HEK293 (cell line): ENCODE measurements at regions of chr12 and their contacts with region 1.

Region 1: GRCh38 chr12:31406345-31406744 is 80.4 kb upstream of the SINHCAF start:
- H3K4me3 ChIP-seq: no peak overlapping the region
- H3K27ac ChIP-seq: no peak overlapping the region
- H3K4me1 ChIP-seq: no peaks in the 10 kb centered on the region
- CTCF ChIP-seq: no peak

Region 2: GRCh38 chr12:31423405-31423804 is 17.1 kb after region 1 on chr12:
- CTCF ChIA-PET with region 1: interaction called, 12 read pairs
- POLR2A ChIA-PET with region 1: no interaction called
- H3K4me3 ChIP-seq: no peak overlapping the region
- H3K27ac ChIP-seq: no peak overlapping the region
- H3K4me1 ChIP-seq: no peaks in the 10 kb centered on the region
- CTCF ChIP-seq: no peak

Region 3: DNA sequence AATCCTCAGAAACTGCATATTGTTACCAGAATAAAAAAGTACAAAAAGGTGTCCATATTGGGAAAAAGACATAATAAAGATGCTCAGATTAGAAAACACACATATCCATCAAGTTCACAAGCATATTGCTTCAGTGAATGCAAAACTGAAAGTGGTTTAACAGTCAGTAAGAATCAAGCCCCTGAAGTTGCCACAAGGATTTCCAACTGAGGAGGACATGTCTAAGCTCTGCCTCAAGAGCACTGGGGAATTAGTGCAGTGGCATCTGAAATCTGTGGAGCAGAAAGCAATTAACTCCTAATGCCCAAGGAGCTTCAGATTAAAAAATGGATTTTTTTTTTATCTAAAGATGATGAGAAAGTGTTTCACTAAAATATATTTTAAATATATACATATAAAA is 71.3 kb after region 1 on chr12:
- CTCF ChIA-PET with region 1: no interaction called
- POLR2A ChIA-PET with region 1: no interaction called
- H3K4me3 ChIP-seq: no peak overlapping the region
- H3K27ac ChIP-seq: no peak overlapping the region
- H3K4me1 ChIP-seq: no peaks in the 10 kb centered on the region; the same call in 1 of the 2 replicates
- CTCF ChIP-seq: no peak

Region 4: GRCh38 chr12:31518680-31519227 is 112.4 kb after region 1 on chr12:
- CTCF ChIA-PET with region 1: interaction called, 10 read pairs
- POLR2A ChIA-PET with region 1: no interaction called
- H3K4me3 ChIP-seq: no peak overlapping the region
- H3K27ac ChIP-seq: no peak overlapping the region
- H3K4me1 ChIP-seq: peaks cover 30% of the 10 kb centered on the region
- CTCF ChIP-seq: no peak

Region 5: DNA sequence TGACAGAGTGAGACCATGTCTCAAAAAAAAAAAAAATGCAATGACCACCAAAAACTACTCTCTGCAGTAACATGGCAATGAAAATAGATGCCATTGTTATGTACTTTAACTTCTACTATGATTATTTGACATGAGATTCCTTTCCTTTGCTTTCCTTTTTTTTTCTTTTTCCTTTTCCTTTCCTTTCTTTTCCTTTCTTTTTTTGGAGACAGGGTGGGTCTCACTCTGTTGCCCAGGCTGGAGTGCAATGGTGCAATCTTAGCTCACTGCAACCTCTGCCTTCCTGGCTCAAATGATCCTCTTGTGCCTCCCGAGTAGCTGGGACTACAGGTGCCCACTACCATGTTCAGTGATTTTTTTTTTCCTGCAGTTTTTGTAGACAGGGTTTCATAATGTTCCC is 228.3 kb after region 1 on chr12:
- CTCF ChIA-PET with region 1: interaction called, 19 read pairs
- POLR2A ChIA-PET with region 1: no interaction called
- H3K4me3 ChIP-seq: no peak overlapping the region
- H3K27ac ChIP-seq: no peak overlapping the region
- H3K4me1 ChIP-seq: peaks cover 4% of the 10 kb centered on the region
- CTCF ChIP-seq: no peak

Region 6: DNA sequence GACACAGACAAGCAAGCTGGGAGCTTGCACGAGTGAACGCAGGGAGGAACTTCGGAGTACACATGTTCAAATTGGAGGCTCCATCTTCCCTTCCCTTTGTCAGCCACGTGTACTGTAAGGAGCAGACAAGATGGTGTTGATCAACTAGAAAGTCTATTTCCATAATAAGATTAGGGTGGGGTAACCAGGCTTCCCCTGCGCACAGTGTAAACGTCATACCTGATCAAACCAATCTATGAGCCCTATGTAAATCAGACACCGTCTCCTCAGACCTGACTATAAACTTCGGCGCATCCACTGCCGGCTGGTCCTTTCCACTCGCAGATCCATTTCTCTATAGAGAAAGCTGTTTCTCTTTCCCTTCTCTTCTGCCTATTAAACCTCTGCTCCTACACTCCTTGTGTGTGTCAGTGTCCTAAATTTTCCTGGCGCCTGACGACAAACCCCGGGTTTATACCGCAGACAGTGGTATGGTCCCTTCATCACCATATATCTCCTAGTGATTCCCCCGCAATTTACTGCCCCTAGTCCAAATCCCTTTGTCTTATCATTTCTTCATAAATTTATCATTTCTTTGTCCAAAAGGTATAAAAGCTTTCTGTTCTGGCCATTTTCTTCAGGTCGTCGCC is 245.7 kb after region 1 on chr12:
- CTCF ChIA-PET with region 1: interaction called, 15 read pairs
- POLR2A ChIA-PET with region 1: no interaction called
- H3K4me3 ChIP-seq: no peak overlapping the region
- H3K27ac ChIP-seq: no peak overlapping the region
- H3K4me1 ChIP-seq: no peaks in the 10 kb centered on the region
- CTCF ChIP-seq: no peak